ENCODE measurements at regions of chr9 and their contacts with region 1.

Region 1: DNA sequence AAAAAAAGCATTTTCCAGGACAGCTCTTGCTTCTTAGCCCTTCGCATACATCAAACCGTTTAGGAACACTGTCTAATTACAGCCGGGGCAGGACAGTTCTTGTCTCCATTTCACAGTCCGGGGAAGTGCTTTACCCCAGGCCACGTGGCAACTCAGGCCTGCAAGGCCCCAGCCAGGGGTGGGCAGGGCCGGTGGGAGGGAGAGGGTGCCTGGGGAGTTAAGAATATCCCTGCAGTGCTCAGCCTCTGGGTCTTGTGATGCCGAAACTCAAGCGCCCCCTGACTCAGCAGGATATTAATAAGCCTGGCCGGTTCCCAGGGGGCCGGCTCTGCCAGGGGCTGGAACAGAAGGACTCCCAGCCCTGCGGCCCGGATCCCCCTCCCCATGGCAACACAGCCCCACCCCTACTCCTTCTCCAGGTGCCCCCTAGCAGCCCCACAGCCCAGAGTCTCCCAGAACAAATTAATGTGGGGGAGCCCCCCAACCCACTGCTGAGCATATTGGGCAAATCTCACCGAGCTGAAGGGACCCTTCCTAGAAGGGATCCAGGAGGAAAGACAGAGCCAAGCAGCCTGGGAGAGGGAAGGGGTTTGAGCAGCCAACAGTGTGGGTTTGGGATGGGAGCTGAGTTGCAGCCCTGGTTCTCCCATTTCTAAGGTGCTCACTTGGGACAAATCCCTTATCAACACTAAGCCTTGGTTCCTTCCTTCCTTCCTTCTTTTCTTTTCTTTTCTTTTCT is 45.3 kb downstream of the PLPP7 start:
- DNase-seq: no peak
- H3K4me3 ChIP-seq: no peak overlapping the region
- H3K4me1 ChIP-seq: no peaks in the 10 kb centered on the region
- H3K27me3 ChIP-seq: no peaks in the 10 kb centered on the region

Region 2: GRCh38 chr9:131056781-131057506 is 277.9 kb before region 1 on chr9:
- in situ Hi-C with region 1: loop called (anchors 5 kb)
- DNase-seq: no peak
- H3K4me3 ChIP-seq: no peak overlapping the region
- H3K4me1 ChIP-seq: no peaks in the 10 kb centered on the region
- H3K27me3 ChIP-seq: no peaks in the 10 kb centered on the region

Region 3: GRCh38 chr9:131178382-131178781 is 156.4 kb before region 1 on chr9:
- in situ Hi-C with region 1: loop called (anchors 5 kb)
- DNase-seq: peak; percentile 70 to 83
- H3K4me3 ChIP-seq: no peak overlapping the region
- H3K4me1 ChIP-seq: no peaks in the 10 kb centered on the region
- H3K27me3 ChIP-seq: no peaks in the 10 kb centered on the region

Region 4: GRCh38 chr9:131407717-131408195 is 73.0 kb after region 1 on chr9:
- in situ Hi-C with region 1: no loop called
- DNase-seq: peak; percentile 52 to 71
- H3K4me3 ChIP-seq: no peak overlapping the region
- H3K4me1 ChIP-seq: peaks cover 64% of the 10 kb centered on the region
- H3K27me3 ChIP-seq: no peaks in the 10 kb centered on the region

Measured in HAP-1 (cell line).